Left cardiac atrium (tissue), 4 donors: ENCODE measurements at regions of chr3 and their contacts with region 1.

Region 1: DNA sequence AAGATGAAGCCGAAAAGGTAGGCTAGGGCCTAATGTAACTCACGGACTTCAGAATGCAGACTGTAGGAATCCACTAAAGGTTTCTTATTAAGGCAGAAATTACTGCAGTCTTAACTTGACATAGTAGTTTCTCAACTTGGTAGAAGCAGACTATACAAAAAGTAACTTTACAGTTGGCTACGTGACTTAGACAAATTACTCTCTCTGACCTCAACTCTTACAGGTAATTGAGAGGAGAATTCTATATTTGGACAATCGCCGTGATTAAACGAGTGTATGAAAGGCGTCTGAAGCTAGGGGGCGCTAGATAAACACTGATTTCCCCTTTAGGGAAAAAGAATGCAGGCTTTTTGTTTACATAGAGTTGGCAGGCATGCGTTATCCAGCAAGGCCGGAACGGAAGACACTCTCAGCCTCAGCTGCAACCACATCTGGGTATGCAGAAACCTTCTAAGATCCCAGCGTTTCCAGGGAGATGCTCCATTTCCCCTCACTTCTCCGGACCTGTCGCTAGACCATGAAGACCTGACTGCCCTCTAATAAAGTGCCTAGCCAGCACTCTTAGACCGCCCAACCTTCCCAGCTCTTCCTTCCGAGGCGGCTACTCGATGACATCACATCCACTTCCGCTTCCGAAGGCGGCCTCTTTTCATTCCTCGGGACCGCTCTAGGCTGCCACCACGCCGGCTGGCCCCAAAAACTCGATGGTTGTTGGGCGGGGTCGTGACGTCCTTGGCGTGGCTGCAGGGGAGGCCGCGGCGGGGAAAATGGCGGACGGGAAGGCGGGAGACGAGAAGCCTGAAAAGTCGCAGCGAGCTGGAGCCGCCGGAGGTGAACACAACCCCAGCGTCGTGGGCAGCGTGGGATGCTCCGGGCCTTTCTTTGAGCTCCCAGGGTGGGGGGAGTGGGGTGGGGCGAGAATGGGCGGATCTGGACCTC is at the start of gene PCNP:
- DNase-seq: peak; percentile 99
- ATAC-seq: peak; percentile 97
- total RNA-seq, gene PCNP: 108 to 122 TPM

Region 2: DNA sequence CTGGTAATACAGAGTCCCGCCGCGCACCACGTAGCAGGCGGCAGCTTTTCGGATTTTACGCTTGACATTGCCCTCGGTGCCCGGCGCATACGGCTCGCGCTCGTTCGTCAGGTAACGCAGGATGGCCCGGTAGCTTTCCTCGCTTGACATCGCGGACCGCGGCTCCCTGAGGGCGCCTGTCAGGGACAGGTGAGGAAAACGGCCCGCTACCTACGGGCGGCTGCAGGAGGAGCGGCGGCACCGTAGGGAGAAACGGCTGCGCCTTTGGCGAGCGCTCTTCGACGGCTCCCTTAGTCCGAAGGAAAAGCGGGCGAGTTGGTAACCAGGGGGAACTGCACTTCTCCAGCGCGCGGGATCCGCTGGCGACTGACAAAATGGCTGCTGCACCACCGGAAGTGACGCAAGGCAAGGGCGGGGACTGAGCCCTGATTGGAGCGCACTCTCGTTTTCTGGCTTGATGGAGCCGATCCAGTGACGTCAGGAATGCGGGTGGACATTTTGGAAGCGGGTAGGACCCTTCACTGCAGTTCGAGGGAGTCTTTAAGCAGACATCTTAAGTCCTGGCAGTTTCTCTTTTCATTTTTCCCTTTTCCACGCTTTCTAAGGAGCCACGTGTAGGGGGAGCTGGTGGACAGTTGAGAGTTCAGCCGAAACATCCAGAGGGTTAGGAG is 103.2 kb after region 1 on chr3 and contains the start of gene ZBTB11:
- intact Hi-C with region 1: loop called in 1 of 2 experiments (anchors 2 kb)
- DNase-seq: peak; percentile 100
- ATAC-seq: peak; percentile 89 to 95
- total RNA-seq, gene ZBTB11: 8.3 to 10.3 TPM